Dorsolateral prefrontal cortex (tissue), 120 donors: ENCODE measurements at regions of chr1 and their contacts with region 1.

Region 1: DNA sequence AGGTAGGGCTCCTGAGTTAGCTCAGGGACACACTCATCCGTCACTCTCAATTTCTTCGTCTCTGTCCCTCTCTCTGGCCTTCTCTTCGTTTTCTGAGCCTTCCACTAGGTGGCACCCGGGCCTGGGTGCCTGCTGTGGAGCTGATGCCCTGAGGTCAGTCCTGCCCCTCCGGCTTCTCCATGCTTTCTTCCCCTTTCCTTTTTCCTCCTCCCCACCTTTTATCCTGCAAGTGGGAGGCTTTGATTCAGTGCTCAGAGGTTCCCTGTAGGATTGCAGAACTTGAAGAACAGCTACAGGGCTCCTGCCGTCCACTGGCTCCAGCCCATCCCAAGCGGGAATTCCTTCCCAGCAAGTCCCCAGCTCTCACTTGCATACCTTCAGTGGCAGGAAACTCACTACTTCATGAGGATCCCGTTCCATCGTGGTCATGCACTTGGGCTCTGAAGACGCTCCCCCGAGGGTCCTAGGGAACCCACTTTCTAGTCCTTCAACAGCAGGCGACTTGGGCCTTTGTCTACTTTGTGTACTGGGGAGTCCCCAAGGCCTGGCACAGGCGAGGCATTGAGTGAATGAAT is 45.6 kb downstream of the SRRM1 start:
- DNase-seq: peak; percentile 13 to 83 (median 74)
- H3K4me3 ChIP-seq: peak overlapping the region in 1 of 59 donors; percentile 4
- H3K27ac ChIP-seq: peak overlapping the region in 34 of 59 donors; percentile 4 to 80 (median 50)
- H3K27me3 ChIP-seq: no peaks in the 10 kb centered on the region
- CTCF ChIP-seq: peak; percentile 55 to 98 (median 88)

Region 2: DNA sequence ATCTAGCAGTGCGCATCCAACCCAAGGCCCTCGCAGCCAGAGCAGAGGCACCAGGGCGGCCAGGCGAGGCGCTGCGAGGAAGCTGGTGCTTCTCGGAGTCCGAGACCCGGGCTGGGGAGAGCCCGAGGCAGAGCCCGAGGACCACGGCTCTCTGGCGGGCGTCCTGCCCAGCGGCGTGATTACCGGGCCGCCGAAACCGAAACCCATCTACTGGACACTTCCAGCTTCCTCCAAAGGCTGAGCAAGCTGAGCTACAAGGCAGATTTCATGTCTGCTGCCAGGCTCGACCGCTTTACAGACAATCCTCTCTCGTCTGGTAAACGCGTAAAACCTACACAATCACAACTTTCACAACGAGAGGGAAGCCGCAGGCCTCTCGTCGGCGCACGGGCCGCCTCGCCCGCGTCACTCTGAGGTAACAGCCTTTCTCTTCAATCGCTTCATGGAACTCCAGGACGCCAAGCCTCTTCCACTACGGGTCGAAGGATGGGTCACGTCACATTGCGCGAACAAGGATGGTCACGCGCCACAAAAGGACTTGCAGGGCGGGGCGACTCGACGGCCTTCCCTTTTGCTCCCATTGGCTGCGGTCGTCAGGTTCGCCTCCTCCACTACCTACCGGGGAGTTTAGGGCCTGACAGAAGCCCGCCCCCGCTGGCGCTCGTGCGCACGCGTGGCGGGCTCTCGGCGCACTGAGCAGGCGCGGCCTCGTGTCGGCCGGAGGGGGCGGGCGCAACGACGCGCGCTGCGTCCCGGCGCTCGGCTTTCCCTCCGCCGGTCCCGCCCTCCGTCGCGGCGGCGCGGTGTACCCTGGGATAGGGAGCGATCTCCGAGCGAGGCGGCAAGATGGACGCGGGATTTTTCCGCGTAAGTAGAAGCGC is 46.0 kb before region 1 on chr1 and contains the start of gene SRRM1:
- intact Hi-C with region 1: no loop called
- DNase-seq: peak; percentile 98 to 100 (median 100)
- H3K4me3 ChIP-seq: peak within 1 kb of the TSS; percentile 66 to 100 (median 95)
- H3K27ac ChIP-seq: peak within 1 kb of the TSS; percentile 80 to 100 (median 98)
- H3K27me3 ChIP-seq: no peaks in the 10 kb centered on the region
- CTCF ChIP-seq: peak in 34 of 56 donors; percentile 0 to 60 (median 16)
- total RNA-seq, gene SRRM1: 76.0 to 224 (median 129) TPM

Region 3: DNA sequence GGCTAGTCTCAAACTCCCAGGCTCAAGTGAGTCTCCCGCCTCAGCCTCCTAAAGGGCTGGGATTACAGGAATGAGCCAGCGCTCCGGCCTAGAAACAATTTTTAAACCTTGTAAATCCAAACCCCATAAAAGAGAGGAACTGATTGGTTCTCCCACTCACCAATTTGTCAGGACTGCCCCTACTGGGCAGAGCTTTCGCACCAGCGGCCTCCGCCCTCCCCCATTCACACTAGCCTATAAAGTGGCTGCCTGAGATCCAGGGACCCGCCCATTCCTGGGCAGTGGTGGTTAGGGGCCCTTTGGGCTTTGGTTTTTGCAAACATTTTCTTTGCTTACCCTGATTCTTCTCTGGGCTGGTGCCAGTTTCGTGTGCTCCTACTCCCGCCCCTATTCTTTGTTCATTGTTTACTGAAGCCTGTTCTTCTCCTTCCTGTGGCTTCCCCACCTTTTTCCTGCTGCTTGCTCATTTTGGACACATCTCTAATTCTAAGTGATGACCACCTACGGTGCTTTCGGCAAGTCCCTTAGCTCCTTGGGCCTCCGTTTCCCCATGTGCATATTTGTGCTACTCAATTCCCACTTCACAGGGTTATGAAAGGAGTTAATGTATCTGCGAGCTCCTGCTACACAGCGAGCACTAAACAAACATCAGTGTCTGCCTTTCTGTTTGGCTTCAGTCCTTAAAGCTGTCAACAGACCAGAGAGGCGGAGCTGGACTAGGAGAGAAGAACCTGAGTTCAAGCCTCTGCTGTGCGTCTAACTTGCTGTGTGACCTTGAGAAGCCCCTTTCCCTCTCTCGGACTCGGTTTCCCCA is 16.8 kb after region 1 on chr1:
- intact Hi-C with region 1: loop called in 1 of 2 experiments (anchors 1 kb)
- DNase-seq: peak; percentile 11 to 91 (median 86)
- H3K4me3 ChIP-seq: peak overlapping the region in 53 of 59 donors; percentile 7 to 61 (median 32)
- H3K27ac ChIP-seq: peak overlapping the region; percentile 67 to 98 (median 93)
- H3K27me3 ChIP-seq: no peaks in the 10 kb centered on the region
- CTCF ChIP-seq: peak in 39 of 56 donors; percentile 10 to 52 (median 36)

Region 4: GRCh38 chr1:24714859-24715520 is 26.3 kb after region 1 on chr1:
- intact Hi-C with region 1: loop called in 1 of 2 experiments (anchors 2 kb)
- DNase-seq: peak; percentile 20 to 92 (median 88)
- H3K4me3 ChIP-seq: peak overlapping the region in 15 of 59 donors; percentile 9 to 44 (median 23)
- H3K27ac ChIP-seq: peak overlapping the region; percentile 58 to 98 (median 93)
- H3K27me3 ChIP-seq: no peaks in the 10 kb centered on the region
- CTCF ChIP-seq: peak in 13 of 56 donors; percentile 4 to 38 (median 14)

Region 5: DNA sequence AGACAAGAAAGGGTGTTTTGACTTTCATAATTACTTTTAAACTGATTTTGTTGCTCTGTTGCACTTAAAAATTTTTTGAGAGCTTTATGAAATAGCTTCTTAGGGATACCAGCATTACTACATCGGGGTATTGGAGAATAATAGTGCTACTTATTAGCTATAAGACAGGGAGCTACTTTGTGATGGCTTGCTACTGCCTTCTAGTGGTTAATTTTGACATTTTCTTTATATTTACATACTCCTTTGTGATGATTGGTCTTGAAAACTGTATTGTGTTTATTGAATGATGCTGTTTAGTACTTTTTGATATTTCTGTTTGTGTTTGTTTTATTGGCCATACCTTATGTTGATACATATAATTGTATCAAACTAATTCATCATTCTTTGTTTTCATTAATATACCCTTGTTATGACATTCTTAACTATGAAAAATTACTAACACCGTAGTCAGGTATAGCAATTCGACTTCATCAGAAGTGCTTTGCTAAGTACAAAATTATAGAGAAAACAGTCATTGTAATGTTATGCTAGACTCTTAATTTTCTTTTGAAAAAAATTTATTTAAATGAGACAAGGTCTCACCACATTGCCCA is 142.1 kb after region 1 on chr1:
- intact Hi-C with region 1: loop called (anchors 2 kb)
- DNase-seq: no peak
- H3K4me3 ChIP-seq: peak overlapping the region in 4 of 59 donors; percentile 4 to 40 (median 27)
- H3K27ac ChIP-seq: peak overlapping the region in 37 of 59 donors; percentile 5 to 75 (median 48)
- H3K27me3 ChIP-seq: no peaks in the 10 kb centered on the region
- CTCF ChIP-seq: peak; percentile 73 to 95 (median 85)